ENCODE measurements at regions of chr17 and their contacts with region 1.

Region 1: GRCh38 chr17:4263282-4264215 is at the start of gene ANKFY1:
- DNase-seq: peak; percentile 93
- H3K4me3 Mint-ChIP-seq: peak within 1 kb of the TSS; percentile 94
- H3K27ac Mint-ChIP-seq: peak within 1 kb of the TSS; percentile 88
- H3K4me1 Mint-ChIP-seq: peaks cover 17% of the 10 kb centered on the region
- H3K27me3 Mint-ChIP-seq: no peaks in the 10 kb centered on the region
- CTCF ChIP-seq: no peak
- total RNA-seq, gene ANKFY1: 34.9 and 42.8 TPM in 2 replicates

Region 2: DNA sequence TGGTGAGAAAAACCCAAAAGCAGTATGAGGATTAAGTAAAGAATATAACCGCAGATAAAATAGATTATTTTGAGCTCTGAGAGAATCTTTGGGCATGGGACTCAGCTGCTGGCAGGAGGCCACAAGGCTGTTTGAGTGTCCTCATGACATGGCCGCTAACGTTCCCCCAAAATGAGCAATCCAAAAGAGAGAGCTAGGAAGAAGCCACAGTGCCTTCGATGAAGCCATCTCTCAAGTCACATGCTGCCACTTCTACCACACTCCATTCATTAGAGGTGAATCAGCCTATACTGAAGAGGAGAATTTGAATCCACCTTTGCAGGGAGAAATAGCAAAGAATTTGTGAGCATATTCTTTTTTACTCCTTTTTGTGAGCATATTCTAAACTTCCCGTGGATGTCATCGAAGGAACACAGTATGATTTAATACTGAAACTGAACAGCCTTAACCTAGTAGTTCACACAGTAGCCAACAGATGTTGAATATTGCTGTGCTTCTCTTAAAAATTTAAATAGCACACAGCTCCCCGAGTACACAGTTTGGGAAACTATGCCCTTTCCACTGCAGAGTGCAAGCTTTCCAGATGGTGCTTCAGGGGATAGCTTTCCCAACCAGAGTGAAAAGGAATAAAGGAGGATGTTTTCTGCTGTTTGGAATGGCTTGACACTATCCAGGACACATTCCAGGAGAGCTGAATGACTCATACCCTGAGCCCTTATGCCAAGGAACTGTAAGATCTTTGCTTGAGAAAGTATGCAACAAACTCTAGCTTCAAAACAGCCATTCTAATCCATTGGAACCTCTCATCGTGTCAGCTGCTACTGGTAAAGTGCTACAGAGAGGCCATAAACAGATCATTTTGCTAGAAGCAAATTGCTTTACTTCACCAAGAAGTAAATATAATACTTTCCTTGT is 33.7 kb before region 1 on chr17:
- CTCF ChIA-PET with region 1: interaction called, 3 read pairs
- POLR2A ChIA-PET with region 1: interaction called, 16 read pairs
- intact Hi-C with region 1: no loop called
- DNase-seq: peak; percentile 90
- H3K4me3 Mint-ChIP-seq: peak overlapping the region; percentile 63
- H3K27ac Mint-ChIP-seq: peak overlapping the region; percentile 64
- H3K4me1 Mint-ChIP-seq: peaks cover 32% of the 10 kb centered on the region
- H3K27me3 Mint-ChIP-seq: no peaks in the 10 kb centered on the region
- CTCF ChIP-seq: no peak

Region 3: DNA sequence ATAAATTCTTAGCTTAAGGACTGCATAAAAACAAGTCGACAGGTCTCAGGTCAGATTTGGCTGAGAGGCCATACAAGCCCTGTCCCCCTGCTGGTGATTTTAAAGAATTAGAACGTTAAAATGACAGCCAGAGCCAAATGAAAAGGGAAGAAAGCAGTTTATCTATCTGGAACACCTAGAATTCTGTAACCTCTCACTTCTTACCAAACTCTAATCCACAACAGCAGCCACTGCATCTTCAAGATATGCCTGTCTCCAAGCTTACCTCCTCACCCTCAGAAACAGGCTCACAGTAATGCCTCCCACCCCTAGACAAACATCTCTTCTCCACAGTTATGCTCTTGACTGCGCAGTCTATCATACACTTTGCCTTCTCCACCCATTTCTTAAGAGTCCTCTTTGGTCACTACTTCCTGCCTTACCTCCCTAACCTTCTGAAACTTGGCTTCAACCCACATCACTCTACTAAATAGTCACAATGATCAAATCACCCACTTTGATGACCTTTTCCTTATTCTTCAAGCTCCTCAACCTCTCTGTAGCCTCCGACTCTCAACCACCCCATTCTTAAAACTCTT is 14.0 kb before region 1 on chr17:
- CTCF ChIA-PET with region 1: interaction called, 25 read pairs
- POLR2A ChIA-PET with region 1: interaction called, 82 read pairs
- intact Hi-C with region 1: no loop called
- DNase-seq: peak; percentile 59
- H3K4me3 Mint-ChIP-seq: no peak overlapping the region
- H3K27ac Mint-ChIP-seq: peak overlapping the region; percentile 14
- H3K4me1 Mint-ChIP-seq: peaks cover 37% of the 10 kb centered on the region
- H3K27me3 Mint-ChIP-seq: no peaks in the 10 kb centered on the region
- CTCF ChIP-seq: peak; percentile 44

Region 4: DNA sequence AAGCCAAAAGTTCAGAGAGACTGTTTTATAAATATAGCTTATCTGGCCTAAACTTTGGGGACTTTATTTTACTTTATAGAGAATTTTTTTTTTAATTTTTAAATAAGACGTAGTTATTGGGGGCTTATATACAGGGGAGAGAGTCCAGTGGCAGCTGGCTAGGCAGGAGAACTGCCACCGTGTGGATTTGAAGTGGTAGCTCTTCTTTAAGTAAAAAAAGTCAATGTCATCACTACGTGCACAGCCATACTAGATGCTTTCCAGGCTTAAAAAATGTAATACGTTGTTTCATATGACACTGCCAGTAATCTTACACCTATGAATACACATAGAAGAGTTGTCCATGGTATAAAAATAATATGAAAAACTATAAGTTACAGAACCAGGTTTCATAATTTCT is 32.1 kb after region 1 on chr17:
- CTCF ChIA-PET with region 1: no interaction called
- POLR2A ChIA-PET with region 1: no interaction called
- intact Hi-C with region 1: no loop called
- DNase-seq: no peak
- H3K4me3 Mint-ChIP-seq: no peak overlapping the region
- H3K27ac Mint-ChIP-seq: no peak overlapping the region
- H3K4me1 Mint-ChIP-seq: no peaks in the 10 kb centered on the region
- H3K27me3 Mint-ChIP-seq: no peaks in the 10 kb centered on the region
- CTCF ChIP-seq: no peak

Region 5: GRCh38 chr17:4366327-4367063 is 102.9 kb after region 1 on chr17 and contains the start of gene UBE2G1:
- CTCF ChIA-PET with region 1: interaction called, 4 read pairs
- POLR2A ChIA-PET with region 1: interaction called, 6 read pairs
- intact Hi-C with region 1: loop called (anchors 10 kb)
- DNase-seq: peak; percentile 95
- H3K4me3 Mint-ChIP-seq: peak within 1 kb of the TSS; percentile 80
- H3K27ac Mint-ChIP-seq: peak within 1 kb of the TSS; percentile 87
- H3K4me1 Mint-ChIP-seq: peaks cover 12% of the 10 kb centered on the region
- H3K27me3 Mint-ChIP-seq: no peaks in the 10 kb centered on the region
- CTCF ChIP-seq: peak; percentile 31
- total RNA-seq, gene UBE2G1: 65.1 and 78.5 TPM in 2 replicates